Activated naive CD4-positive, alpha-beta T cell treated with anti-CD3 and anti-CD28 coated beads for 36 hours (primary cell): ENCODE measurements at regions of chr12 and their contacts with region 1.

Region 1: GRCh38 chr12:108562348-108563135 is at the start of gene ISCU:
- DNase-seq: peak; percentile 99
- H3K4me3 Mint-ChIP-seq: peak within 1 kb of the TSS; percentile 100
- H3K27ac Mint-ChIP-seq: peak within 1 kb of the TSS; percentile 100
- H3K4me1 Mint-ChIP-seq: peaks cover 59% of the 10 kb centered on the region
- H3K27me3 Mint-ChIP-seq: no peaks in the 10 kb centered on the region
- total RNA-seq, gene ISCU: 103 to 105 TPM

Region 2: DNA sequence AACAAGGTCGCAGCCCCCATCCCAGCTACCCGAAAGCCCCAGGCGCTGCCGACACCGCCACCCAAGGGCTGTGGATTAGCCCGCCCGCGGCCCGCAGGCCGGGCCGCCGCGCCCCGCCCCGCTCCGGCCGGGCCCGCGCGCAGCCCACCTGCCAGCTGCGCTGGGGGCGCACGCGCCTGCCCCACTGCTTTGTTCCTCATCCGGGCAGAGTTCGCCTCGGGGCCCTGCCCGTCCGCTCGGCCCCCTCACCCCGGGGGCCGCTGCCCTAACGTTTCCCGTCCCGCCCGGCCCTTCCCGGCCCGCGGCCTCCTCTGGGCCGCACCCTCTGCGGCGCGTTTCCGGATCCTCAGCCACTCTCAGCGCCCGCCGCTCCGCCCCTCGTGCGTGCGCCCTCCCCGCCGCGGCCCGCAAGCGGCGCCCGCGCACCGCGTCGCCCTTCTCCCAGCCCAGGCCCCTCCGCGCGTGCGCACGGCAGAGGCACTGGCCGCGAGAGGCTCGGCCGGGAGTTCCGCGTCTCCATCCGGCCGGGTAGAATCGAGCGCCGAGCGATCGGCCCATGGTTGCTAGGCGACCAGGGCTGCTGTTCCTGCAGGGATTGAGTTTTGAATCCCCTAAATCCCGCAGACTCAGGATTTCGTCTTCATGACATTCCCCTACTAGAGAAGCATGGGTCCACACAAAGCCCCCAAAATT is 801.6 kb before region 1 on chr12 and contains the start of gene PRDM4:
- CTCF ChIA-PET with region 1: no interaction called
- intact Hi-C with region 1: loop called (anchors 2 kb)
- DNase-seq: peak; percentile 92
- H3K4me3 Mint-ChIP-seq: peak within 1 kb of the TSS; percentile 93
- H3K27ac Mint-ChIP-seq: peak within 1 kb of the TSS; percentile 83
- H3K4me1 Mint-ChIP-seq: peaks cover 24% of the 10 kb centered on the region
- H3K27me3 Mint-ChIP-seq: no peaks in the 10 kb centered on the region
- total RNA-seq, gene PRDM4: 18.8 to 20.6 TPM

Region 3: GRCh38 chr12:108618079-108618952 is 55.8 kb after region 1 on chr12:
- CTCF ChIA-PET with region 1: interaction called, 306 read pairs
- intact Hi-C with region 1: loop called (anchors 1 kb)
- DNase-seq: peak; percentile 81
- H3K4me3 Mint-ChIP-seq: no peak overlapping the region
- H3K27ac Mint-ChIP-seq: peak overlapping the region; percentile 20
- H3K4me1 Mint-ChIP-seq: peaks cover 36% of the 10 kb centered on the region
- H3K27me3 Mint-ChIP-seq: no peaks in the 10 kb centered on the region

Region 4: DNA sequence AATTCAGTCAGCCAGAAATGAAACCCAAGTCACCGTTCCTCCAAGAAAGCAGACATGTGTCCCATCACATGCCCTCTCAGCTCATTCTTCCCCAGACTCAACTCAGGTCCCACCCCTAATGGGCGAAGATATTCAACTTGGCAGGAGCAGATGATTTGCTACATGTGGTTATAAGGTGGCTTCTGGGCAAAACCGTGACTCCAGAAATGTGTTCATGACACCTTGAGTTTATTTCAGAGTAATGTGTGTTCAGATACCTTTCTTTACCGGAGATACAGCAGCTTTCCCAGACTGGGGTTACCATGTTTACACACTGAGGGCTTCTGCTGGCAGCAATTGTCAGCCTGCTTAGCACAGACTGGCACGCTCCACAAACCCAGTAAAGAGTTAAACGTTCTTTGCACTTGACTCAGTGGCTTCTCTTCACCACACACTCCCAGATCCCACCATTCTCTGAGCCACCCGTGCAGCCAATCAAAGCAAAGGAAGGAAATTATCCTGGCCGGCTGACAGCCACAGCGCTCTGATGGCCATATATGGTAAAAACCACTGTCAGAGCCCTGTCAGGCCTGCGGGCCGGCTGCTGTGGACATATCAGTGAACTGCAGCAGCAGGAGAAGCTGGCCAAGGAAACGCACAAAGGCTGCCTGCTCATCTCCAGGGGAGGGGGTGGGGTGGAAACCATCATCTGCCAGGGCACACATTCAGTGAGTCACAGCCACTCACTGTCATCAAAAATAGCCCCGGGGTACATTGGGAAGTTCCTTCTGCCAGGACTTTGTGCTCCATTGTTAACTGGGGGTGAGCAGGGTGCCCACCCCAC is 128.8 kb after region 1 on chr12:
- CTCF ChIA-PET with region 1: interaction called, 4 read pairs
- intact Hi-C with region 1: loop called (anchors 1 kb)
- DNase-seq: peak; percentile 92
- H3K4me3 Mint-ChIP-seq: peak overlapping the region; percentile 55
- H3K27ac Mint-ChIP-seq: peak overlapping the region; percentile 80
- H3K4me1 Mint-ChIP-seq: peaks cover 77% of the 10 kb centered on the region
- H3K27me3 Mint-ChIP-seq: peaks cover 2% of the 10 kb centered on the region

Region 5: DNA sequence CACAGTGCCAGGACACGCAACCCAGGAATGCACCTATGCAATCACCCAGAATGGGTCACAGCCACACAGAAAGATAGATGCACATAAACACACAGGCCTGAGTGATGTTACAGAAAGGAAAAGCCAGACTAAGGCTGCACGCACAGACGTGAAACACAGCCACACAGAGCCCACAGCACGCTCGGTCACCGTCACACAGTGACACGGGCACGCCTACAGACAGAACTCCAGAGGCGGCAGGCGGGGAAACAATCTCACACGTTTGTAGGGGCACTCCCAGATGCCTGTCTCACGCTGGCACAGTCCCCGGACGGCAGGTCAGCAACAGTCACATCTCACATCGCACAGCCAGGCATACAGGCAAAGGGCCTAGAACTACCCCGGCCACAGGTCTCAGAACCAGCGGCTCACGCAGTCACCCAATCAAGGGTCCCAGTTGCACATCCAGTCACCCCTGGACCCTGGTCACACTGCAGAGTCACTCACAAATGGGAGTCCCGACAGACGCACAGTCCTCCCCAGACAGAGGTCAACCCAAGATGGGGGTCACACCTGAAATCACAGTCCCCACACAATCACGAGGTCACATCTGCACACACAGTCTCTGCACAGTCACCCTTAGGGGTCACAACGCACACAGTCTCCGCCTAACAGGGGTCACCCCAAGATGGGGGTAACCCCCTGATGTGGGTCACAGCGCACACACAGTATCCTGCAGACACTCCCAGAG is 294.1 kb after region 1 on chr12:
- CTCF ChIA-PET with region 1: no interaction called
- intact Hi-C with region 1: loop called (anchors 1 kb)
- DNase-seq: peak; percentile 74
- H3K4me3 Mint-ChIP-seq: peak overlapping the region; percentile 92
- H3K27ac Mint-ChIP-seq: peak overlapping the region; percentile 75
- H3K4me1 Mint-ChIP-seq: peaks cover 40% of the 10 kb centered on the region
- H3K27me3 Mint-ChIP-seq: no peaks in the 10 kb centered on the region

Region 6: GRCh38 chr12:109093022-109093918 is 530.7 kb after region 1 on chr12 and contains the start of gene ALKBH2:
- CTCF ChIA-PET with region 1: no interaction called
- intact Hi-C with region 1: loop called (anchors 1 kb)
- DNase-seq: peak; percentile 96
- H3K4me3 Mint-ChIP-seq: peak within 1 kb of the TSS; percentile 85
- H3K27ac Mint-ChIP-seq: peak within 1 kb of the TSS; percentile 81
- H3K4me1 Mint-ChIP-seq: peaks cover 44% of the 10 kb centered on the region
- H3K27me3 Mint-ChIP-seq: no peaks in the 10 kb centered on the region
- total RNA-seq, gene ALKBH2: 31.1 to 32.7 TPM

Region 7: GRCh38 chr12:109995686-109996482 is 1433.3 kb after region 1 on chr12 and contains the start of gene GIT2:
- CTCF ChIA-PET with region 1: no interaction called
- intact Hi-C with region 1: loop called (anchors 10 kb)
- DNase-seq: peak; percentile 96
- H3K4me3 Mint-ChIP-seq: peak within 1 kb of the TSS; percentile 94
- H3K27ac Mint-ChIP-seq: peak within 1 kb of the TSS; percentile 93
- H3K4me1 Mint-ChIP-seq: peaks cover 54% of the 10 kb centered on the region
- H3K27me3 Mint-ChIP-seq: no peaks in the 10 kb centered on the region
- total RNA-seq, gene GIT2: 40.2 to 41.6 TPM